CD4-positive, alpha-beta T cell (primary cell): ENCODE measurements at regions of chr19 and their contacts with region 1.

Region 1: GRCh38 chr19:38869856-38870607 is 8.0 kb downstream of the RINL start:
- DNase-seq: peak; percentile 87 to 98 (median 95)
- ATAC-seq: peak; percentile 93
- H3K4me3 ChIP-seq: peak overlapping the region; percentile 72
- H3K4me3 Mint-ChIP-seq: peak overlapping the region; percentile 86
- H3K27ac ChIP-seq: peak overlapping the region; percentile 62 to 72
- H3K27ac Mint-ChIP-seq: peak overlapping the region; percentile 86
- H3K4me1 ChIP-seq: peaks cover 52% of the 10 kb centered on the region
- H3K4me1 Mint-ChIP-seq: peaks cover 66% of the 10 kb centered on the region
- H3K27me3 ChIP-seq: no peaks in the 10 kb centered on the region
- H3K27me3 Mint-ChIP-seq: no peaks in the 10 kb centered on the region
- CTCF ChIP-seq: peak; percentile 88

Region 2: GRCh38 chr19:38544034-38544958 is 325.7 kb before region 1 on chr19:
- CTCF ChIA-PET with region 1: no interaction called
- POLR2A ChIA-PET with region 1: no interaction called
- intact Hi-C with region 1: loop called in 1 of 2 experiments (anchors 5 kb)
- DNase-seq: peak in 5 of 14 experiments; percentile 12 to 85 (median 75)
- ATAC-seq: peak; percentile 92
- H3K4me3 ChIP-seq: no peak overlapping the region
- H3K4me3 Mint-ChIP-seq: no peak overlapping the region
- H3K27ac ChIP-seq: no peak overlapping the region
- H3K27ac Mint-ChIP-seq: peak overlapping the region; percentile 0
- H3K4me1 ChIP-seq: peaks cover 24% of the 10 kb centered on the region
- H3K4me1 Mint-ChIP-seq: peaks cover 24% of the 10 kb centered on the region
- H3K27me3 ChIP-seq: no peaks in the 10 kb centered on the region
- H3K27me3 Mint-ChIP-seq: no peaks in the 10 kb centered on the region
- CTCF ChIP-seq: peak; percentile 81

Region 3: GRCh38 chr19:38769635-38770211 is 100.3 kb before region 1 on chr19:
- CTCF ChIA-PET with region 1: interaction called, 11 read pairs
- POLR2A ChIA-PET with region 1: interaction called, 6 read pairs
- intact Hi-C with region 1: loop called in 1 of 2 experiments (anchors 5 kb)
- DNase-seq: peak; percentile 83 to 94 (median 92)
- ATAC-seq: peak; percentile 88
- H3K4me3 ChIP-seq: peak overlapping the region; percentile 48
- H3K4me3 Mint-ChIP-seq: peak overlapping the region; percentile 47
- H3K27ac ChIP-seq: peak overlapping the region in 1 of 2 donors; percentile 57
- H3K27ac Mint-ChIP-seq: peak overlapping the region; percentile 65
- H3K4me1 ChIP-seq: peaks cover 14% of the 10 kb centered on the region
- H3K4me1 Mint-ChIP-seq: peaks cover 7% of the 10 kb centered on the region
- H3K27me3 ChIP-seq: no peaks in the 10 kb centered on the region
- H3K27me3 Mint-ChIP-seq: no peaks in the 10 kb centered on the region
- CTCF ChIP-seq: peak; percentile 94

Region 4: DNA sequence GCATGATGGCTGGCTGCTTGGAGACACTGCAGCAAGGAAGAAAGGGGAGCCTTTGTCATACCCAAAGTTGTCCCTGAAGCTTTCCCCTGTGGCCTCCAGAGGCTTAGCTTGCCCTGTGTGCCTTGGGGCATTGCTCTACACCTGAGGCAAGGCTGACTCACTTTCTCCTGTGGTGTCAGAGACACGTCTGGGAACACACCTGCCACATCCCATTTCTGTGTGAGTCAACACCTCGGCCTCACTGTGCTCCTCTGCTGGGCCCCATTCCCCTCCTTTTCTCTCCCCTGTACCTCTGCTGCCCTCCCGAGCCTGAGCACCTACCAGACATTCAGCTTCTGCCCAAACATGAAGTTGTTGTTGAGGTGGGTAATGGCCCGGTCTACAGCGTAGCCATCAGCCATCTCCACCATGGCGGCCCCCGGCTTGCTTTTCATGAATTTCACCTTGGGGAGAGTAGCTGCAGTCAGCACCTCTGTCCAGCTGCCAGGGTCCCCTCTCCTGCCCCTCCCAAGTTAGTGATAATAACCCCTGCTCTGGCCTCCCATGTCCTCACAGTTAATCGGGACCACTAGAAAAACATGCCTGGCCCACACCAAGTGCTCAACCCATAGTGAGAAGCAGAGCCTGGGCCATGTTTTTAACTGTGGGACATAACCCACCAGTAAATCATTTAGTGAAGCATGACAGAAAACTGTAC is 31.3 kb before region 1 on chr19:
- CTCF ChIA-PET with region 1: interaction called, 6 read pairs
- POLR2A ChIA-PET with region 1: interaction called, 30 read pairs
- intact Hi-C with region 1: loop called in 1 of 2 experiments (anchors 5 kb)
- DNase-seq: peak in 5 of 14 experiments; percentile 29 to 60 (median 33)
- ATAC-seq: no peak
- H3K4me3 ChIP-seq: no peak overlapping the region
- H3K4me3 Mint-ChIP-seq: no peak overlapping the region
- H3K27ac ChIP-seq: no peak overlapping the region
- H3K27ac Mint-ChIP-seq: peak overlapping the region; percentile 55
- H3K4me1 ChIP-seq: peaks cover 42% of the 10 kb centered on the region
- H3K4me1 Mint-ChIP-seq: peaks cover 39% of the 10 kb centered on the region
- H3K27me3 ChIP-seq: no peaks in the 10 kb centered on the region
- H3K27me3 Mint-ChIP-seq: peaks cover 5% of the 10 kb centered on the region
- CTCF ChIP-seq: no peak

Region 5: GRCh38 chr19:38856813-38857212 is 13.2 kb before region 1 on chr19:
- CTCF ChIA-PET with region 1: interaction called, 8 read pairs
- POLR2A ChIA-PET with region 1: interaction called, 170 read pairs
- intact Hi-C with region 1: loop called in 1 of 2 experiments (anchors 1 kb)
- DNase-seq: no peak
- ATAC-seq: no peak
- H3K4me3 ChIP-seq: no peak overlapping the region
- H3K4me3 Mint-ChIP-seq: peak overlapping the region; percentile 56
- H3K27ac ChIP-seq: peak overlapping the region in 1 of 2 donors; percentile 52
- H3K27ac Mint-ChIP-seq: peak overlapping the region; percentile 80
- H3K4me1 ChIP-seq: peaks cover 29% of the 10 kb centered on the region
- H3K4me1 Mint-ChIP-seq: peaks cover 26% of the 10 kb centered on the region
- H3K27me3 ChIP-seq: no peaks in the 10 kb centered on the region
- H3K27me3 Mint-ChIP-seq: no peaks in the 10 kb centered on the region
- CTCF ChIP-seq: no peak